Natural killer cell (primary cell): ENCODE measurements at regions of chr2 and their contacts with region 1.

Region 1: GRCh38 chr2:157443795-157444640 is at the start of gene CYTIP:
- DNase-seq: peak; percentile 41 to 86
- ATAC-seq: peak; percentile 27 to 65 (median 58)
- H3K4me3 ChIP-seq: peak within 1 kb of the TSS; percentile 93
- H3K4me3 Mint-ChIP-seq: peak within 1 kb of the TSS; percentile 90
- H3K27ac ChIP-seq: peak within 1 kb of the TSS; percentile 93
- H3K27ac Mint-ChIP-seq: peak within 1 kb of the TSS; percentile 92 to 94
- H3K4me1 ChIP-seq: peaks cover 21% of the 10 kb centered on the region
- H3K4me1 Mint-ChIP-seq: peaks cover 73 to 78% of the 10 kb centered on the region in 2 donors
- H3K27me3 ChIP-seq: no peaks in the 10 kb centered on the region
- H3K27me3 Mint-ChIP-seq: no peaks in the 10 kb centered on the region
- CTCF ChIP-seq: no peak
- total RNA-seq, gene CYTIP: 276 to 363 (median 357) TPM

Region 2: DNA sequence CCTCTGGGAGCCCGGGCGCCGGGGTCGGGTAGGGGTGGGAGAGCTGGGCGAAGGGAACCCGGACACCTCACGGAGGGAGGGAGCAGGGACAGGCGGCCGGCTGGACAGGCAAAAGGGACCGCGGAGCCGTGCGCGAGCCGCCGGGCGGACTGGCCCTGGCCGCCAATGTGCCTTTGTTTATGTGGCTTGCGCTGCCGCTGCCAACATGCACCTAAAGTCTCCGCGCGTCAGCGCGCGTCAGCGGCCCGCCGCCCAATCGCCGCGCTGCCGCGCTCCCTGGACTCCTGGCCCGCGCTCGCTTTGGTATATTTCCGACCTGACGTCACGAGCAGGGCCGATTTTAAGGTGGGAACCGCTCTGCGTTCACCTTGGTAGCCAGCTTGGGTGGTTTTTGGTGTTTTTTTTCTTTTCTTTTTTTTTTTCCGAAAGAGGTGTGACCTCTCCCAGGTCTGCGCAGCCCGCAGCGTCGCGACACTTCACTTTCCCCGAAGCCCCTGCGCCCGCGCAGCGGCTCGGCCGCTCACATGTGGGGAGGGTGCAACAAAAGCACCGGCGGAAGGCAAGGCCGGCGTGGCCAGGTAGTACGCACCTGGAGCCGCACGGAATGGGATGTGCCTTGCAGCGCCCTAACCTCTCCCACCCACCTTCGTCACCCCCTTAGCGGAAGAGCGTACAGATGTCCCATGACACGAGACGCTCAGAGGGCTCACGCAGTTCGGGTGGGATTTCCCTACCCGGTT is 1111.3 kb before region 1 on chr2 and contains the start of gene NR4A2:
- intact Hi-C with region 1: loop called (anchors 2 kb)
- DNase-seq: peak; percentile 89 to 98
- ATAC-seq: peak; percentile 53 to 80 (median 65)
- H3K4me3 ChIP-seq: peak within 1 kb of the TSS; percentile 91
- H3K4me3 Mint-ChIP-seq: peak within 1 kb of the TSS; percentile 99
- H3K27ac ChIP-seq: peak within 1 kb of the TSS; percentile 97
- H3K27ac Mint-ChIP-seq: peak within 1 kb of the TSS; percentile 99
- H3K4me1 ChIP-seq: peaks cover 44% of the 10 kb centered on the region
- H3K4me1 Mint-ChIP-seq: peaks cover 69 to 76% of the 10 kb centered on the region in 2 donors
- H3K27me3 ChIP-seq: peaks cover 29% of the 10 kb centered on the region
- H3K27me3 Mint-ChIP-seq: peaks cover 28 to 43% of the 10 kb centered on the region in 2 donors
- CTCF ChIP-seq: no peak
- total RNA-seq, gene NR4A2: 163 to 316 (median 266) TPM

Region 3: DNA sequence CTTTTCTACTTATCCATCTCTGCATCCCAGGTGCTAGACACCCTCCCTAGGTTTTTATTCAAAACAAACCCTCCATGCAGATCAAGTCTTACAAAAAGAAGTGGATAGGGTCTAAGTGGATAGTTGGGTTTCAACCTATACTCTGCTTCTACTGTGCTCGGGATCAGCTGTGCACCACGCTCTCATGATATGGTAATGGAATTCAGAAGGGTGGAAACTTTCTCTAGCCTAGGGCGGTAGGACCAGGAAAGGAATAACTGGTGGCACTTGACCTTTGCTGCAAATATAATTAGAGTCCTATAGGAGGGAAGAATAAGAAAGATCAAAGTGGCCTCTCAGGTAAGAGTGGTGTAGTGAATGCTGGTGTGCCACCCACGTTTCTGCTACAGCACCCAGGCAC is 734.9 kb before region 1 on chr2:
- intact Hi-C with region 1: no loop called
- DNase-seq: no peak
- ATAC-seq: no peak
- H3K4me3 ChIP-seq: no peak overlapping the region
- H3K4me3 Mint-ChIP-seq: no peak overlapping the region
- H3K27ac ChIP-seq: no peak overlapping the region
- H3K27ac Mint-ChIP-seq: no peak overlapping the region
- H3K4me1 ChIP-seq: no peaks in the 10 kb centered on the region
- H3K4me1 Mint-ChIP-seq: no peaks in the 10 kb centered on the region
- H3K27me3 ChIP-seq: no peaks in the 10 kb centered on the region
- H3K27me3 Mint-ChIP-seq: peaks cover 0 to 4% of the 10 kb centered on the region in 2 donors
- CTCF ChIP-seq: no peak

Region 4: GRCh38 chr2:157015015-157015575 is 428.9 kb before region 1 on chr2:
- intact Hi-C with region 1: no loop called
- DNase-seq: no peak
- ATAC-seq: no peak
- H3K4me3 ChIP-seq: no peak overlapping the region
- H3K4me3 Mint-ChIP-seq: no peak overlapping the region
- H3K27ac ChIP-seq: no peak overlapping the region
- H3K27ac Mint-ChIP-seq: no peak overlapping the region
- H3K4me1 ChIP-seq: no peaks in the 10 kb centered on the region
- H3K4me1 Mint-ChIP-seq: no peaks in the 10 kb centered on the region
- H3K27me3 ChIP-seq: no peaks in the 10 kb centered on the region
- H3K27me3 Mint-ChIP-seq: no peaks in the 10 kb centered on the region
- CTCF ChIP-seq: no peak

Region 5: DNA sequence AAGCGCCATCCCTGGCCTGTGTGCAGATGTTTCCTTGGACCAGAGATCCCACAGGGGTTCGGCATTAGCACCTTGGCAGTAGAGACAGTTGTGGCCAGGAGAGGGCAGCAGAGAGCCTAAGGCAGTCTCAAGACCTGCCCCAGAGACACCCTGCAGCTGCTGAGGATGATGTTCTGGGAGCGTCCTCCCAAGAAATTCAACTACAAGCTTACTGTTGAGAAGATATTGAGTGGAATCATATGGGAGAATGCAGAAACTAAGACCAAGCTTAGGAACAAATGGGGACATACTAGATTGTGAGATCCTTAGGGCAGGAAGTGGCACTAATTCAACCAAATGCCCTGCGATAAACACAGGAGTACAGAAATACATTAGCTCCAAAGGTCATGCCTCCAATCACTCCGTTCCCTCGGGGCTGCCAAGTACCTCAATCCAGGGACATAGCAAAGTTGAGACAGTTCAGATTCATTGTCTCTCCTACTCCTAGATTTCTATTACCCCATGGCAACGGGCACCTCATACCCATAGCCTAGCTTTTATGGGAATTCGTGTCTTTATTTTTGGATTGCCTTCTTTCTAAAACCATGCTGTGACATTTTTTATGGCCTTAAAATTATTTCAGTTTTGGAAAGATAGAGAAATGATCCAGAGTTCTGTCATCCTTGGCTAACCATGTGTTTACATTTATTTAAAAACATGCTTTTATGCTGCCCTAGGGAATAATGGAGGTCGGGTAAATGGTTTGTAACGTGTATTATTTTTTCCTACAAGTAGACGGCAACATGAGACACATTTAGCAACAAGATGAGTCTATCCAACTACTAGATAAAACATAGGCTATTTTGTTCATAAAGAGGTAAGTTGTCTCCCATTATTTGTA is 116.2 kb before region 1 on chr2:
- intact Hi-C with region 1: loop called (anchors 5 kb)
- DNase-seq: peak; percentile 76 to 94
- ATAC-seq: peak; percentile 93 to 98 (median 95)
- H3K4me3 ChIP-seq: no peak overlapping the region
- H3K4me3 Mint-ChIP-seq: peak overlapping the region; percentile 37
- H3K27ac ChIP-seq: no peak overlapping the region
- H3K27ac Mint-ChIP-seq: peak overlapping the region in 1 of 2 donors; percentile 46
- H3K4me1 ChIP-seq: peaks cover 22% of the 10 kb centered on the region
- H3K4me1 Mint-ChIP-seq: peaks cover 33 to 41% of the 10 kb centered on the region in 2 donors
- H3K27me3 ChIP-seq: no peaks in the 10 kb centered on the region
- H3K27me3 Mint-ChIP-seq: no peaks in the 10 kb centered on the region
- CTCF ChIP-seq: peak; percentile 93

Region 6: GRCh38 chr2:157404363-157404762 is 39.7 kb before region 1 on chr2:
- intact Hi-C with region 1: loop called (anchors 5 kb)
- DNase-seq: peak in 1 of 2 donors; percentile 90
- ATAC-seq: peak; percentile 91 to 98 (median 94)
- H3K4me3 ChIP-seq: no peak overlapping the region
- H3K4me3 Mint-ChIP-seq: peak overlapping the region; percentile 71
- H3K27ac ChIP-seq: peak overlapping the region; percentile 81
- H3K27ac Mint-ChIP-seq: peak overlapping the region; percentile 77 to 86
- H3K4me1 ChIP-seq: peaks cover 26% of the 10 kb centered on the region
- H3K4me1 Mint-ChIP-seq: peaks cover 51 to 56% of the 10 kb centered on the region in 2 donors
- H3K27me3 ChIP-seq: no peaks in the 10 kb centered on the region
- H3K27me3 Mint-ChIP-seq: no peaks in the 10 kb centered on the region
- CTCF ChIP-seq: no peak

Region 7: GRCh38 chr2:157413326-157414035 is 30.5 kb before region 1 on chr2:
- intact Hi-C with region 1: loop called (anchors 2 kb)
- DNase-seq: peak in 1 of 2 donors; percentile 86
- ATAC-seq: peak; percentile 71 to 90 (median 85)
- H3K4me3 ChIP-seq: no peak overlapping the region
- H3K4me3 Mint-ChIP-seq: peak overlapping the region; percentile 80
- H3K27ac ChIP-seq: peak overlapping the region; percentile 86
- H3K27ac Mint-ChIP-seq: peak overlapping the region; percentile 82 to 94
- H3K4me1 ChIP-seq: peaks cover 34% of the 10 kb centered on the region
- H3K4me1 Mint-ChIP-seq: peaks cover 76 to 91% of the 10 kb centered on the region in 2 donors
- H3K27me3 ChIP-seq: no peaks in the 10 kb centered on the region
- H3K27me3 Mint-ChIP-seq: no peaks in the 10 kb centered on the region
- CTCF ChIP-seq: no peak

Region 8: DNA sequence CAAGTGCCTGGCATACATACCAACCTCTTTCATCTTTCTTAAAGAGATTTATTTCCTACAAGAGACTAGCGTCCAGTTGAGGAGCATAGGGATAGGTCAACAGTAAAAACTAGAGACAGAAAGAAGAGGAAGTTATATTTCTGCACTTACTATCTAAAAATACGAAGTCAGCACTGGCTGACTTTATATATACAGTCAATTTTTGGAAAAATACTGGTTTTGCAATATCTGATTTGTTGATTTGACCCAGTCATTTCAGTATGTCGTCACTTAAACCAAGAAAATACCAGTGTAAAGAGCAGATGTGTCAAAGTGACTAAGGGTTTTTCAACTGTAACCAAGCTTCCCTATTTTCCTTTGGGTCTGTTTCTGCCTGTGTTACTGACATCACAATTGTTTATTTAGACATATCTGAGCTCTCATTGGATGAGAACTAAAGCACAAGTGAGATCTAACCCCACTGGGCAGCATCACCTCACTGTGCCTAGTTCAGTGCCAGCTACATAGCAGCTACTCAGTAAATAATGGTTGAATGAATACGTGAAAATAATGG is 23.2 kb before region 1 on chr2:
- intact Hi-C with region 1: loop called (anchors 1 kb)
- DNase-seq: peak in 1 of 2 donors; percentile 60
- ATAC-seq: peak; percentile 54 to 82 (median 60)
- H3K4me3 ChIP-seq: no peak overlapping the region
- H3K4me3 Mint-ChIP-seq: peak overlapping the region; percentile 70
- H3K27ac ChIP-seq: peak overlapping the region; percentile 92
- H3K27ac Mint-ChIP-seq: peak overlapping the region; percentile 92 to 94
- H3K4me1 ChIP-seq: peaks cover 39% of the 10 kb centered on the region
- H3K4me1 Mint-ChIP-seq: peaks cover 62 to 63% of the 10 kb centered on the region in 2 donors
- H3K27me3 ChIP-seq: no peaks in the 10 kb centered on the region
- H3K27me3 Mint-ChIP-seq: no peaks in the 10 kb centered on the region
- CTCF ChIP-seq: no peak

Region 9: DNA sequence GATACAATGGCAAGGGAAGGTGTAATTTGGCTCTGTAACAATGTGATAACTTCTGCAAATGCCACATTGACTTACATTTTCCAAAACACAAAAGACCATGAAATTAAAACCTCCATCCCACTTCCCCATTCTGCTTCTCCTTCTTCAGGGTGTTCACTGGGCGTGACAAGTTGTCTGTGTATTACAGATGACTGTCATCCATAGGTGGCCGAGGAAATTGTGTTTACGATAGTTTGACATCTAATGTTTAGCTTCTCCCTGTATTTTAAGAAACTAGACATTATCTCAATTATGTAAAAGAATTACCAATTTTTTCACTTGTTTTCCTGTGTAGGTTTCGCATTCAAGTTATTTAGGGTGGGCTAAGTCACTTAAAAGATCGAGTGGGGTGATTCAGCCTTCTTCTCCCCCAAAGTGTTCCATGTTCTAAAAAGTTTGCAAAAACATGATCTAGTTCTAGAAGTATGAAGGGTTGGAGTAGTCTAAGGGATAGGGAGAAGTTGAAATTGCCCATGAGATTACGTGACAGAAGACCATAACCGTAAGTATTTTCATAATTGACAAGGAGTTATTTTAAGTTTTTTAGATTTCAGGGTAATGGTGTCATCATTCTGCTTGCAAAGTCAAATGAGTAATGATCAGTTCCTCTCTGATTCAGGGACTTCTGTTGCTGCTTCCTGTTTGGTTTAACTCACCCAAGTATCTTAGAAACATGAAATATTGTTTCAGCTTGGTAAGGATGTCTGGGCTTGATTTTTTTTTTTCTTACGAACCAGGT is 25.1 kb after region 1 on chr2:
- intact Hi-C with region 1: loop called (anchors 2 kb)
- DNase-seq: peak in 1 of 2 donors; percentile 81
- ATAC-seq: peak; percentile 82 to 85 (median 82)
- H3K4me3 ChIP-seq: peak overlapping the region; percentile 10
- H3K4me3 Mint-ChIP-seq: peak overlapping the region; percentile 23
- H3K27ac ChIP-seq: peak overlapping the region; percentile 93
- H3K27ac Mint-ChIP-seq: peak overlapping the region; percentile 80 to 86
- H3K4me1 ChIP-seq: peaks cover 24% of the 10 kb centered on the region
- H3K4me1 Mint-ChIP-seq: peaks cover 25 to 30% of the 10 kb centered on the region in 2 donors
- H3K27me3 ChIP-seq: no peaks in the 10 kb centered on the region
- H3K27me3 Mint-ChIP-seq: peaks cover 0 to 2% of the 10 kb centered on the region in 2 donors
- CTCF ChIP-seq: no peak

Region 10: GRCh38 chr2:157911750-157912149 is 467.7 kb after region 1 on chr2:
- intact Hi-C with region 1: no loop called
- DNase-seq: no peak
- ATAC-seq: no peak
- H3K4me3 ChIP-seq: no peak overlapping the region
- H3K4me3 Mint-ChIP-seq: no peak overlapping the region
- H3K27ac ChIP-seq: no peak overlapping the region
- H3K27ac Mint-ChIP-seq: no peak overlapping the region
- H3K4me1 ChIP-seq: no peaks in the 10 kb centered on the region
- H3K4me1 Mint-ChIP-seq: no peaks in the 10 kb centered on the region
- H3K27me3 ChIP-seq: no peaks in the 10 kb centered on the region
- H3K27me3 Mint-ChIP-seq: peaks cover 11 to 27% of the 10 kb centered on the region in 2 donors
- CTCF ChIP-seq: no peak